HAP-1 (cell line): ENCODE measurements at regions of chr5 and their contacts with region 1.

Region 1: GRCh38 chr5:178083943-178084342 is 29.4 kb upstream of the N4BP3 start:
- DNase-seq: no peak
- H3K4me3 ChIP-seq: no peak overlapping the region
- H3K4me1 ChIP-seq: no peaks in the 10 kb centered on the region
- H3K27me3 ChIP-seq: no peaks in the 10 kb centered on the region

Region 2: GRCh38 chr5:178163772-178164735 is 80.1 kb after region 1 on chr5:
- in situ Hi-C with region 1: loop called (anchors 5 kb)
- DNase-seq: peak; percentile 66 to 93
- H3K4me3 ChIP-seq: no peak overlapping the region
- H3K4me1 ChIP-seq: peaks cover 6% of the 10 kb centered on the region; the same call in 1 of the 2 replicates
- H3K27me3 ChIP-seq: no peaks in the 10 kb centered on the region